WTC11 (cell line): ENCODE measurements at regions of chr7 and their contacts with region 1.

Region 1: DNA sequence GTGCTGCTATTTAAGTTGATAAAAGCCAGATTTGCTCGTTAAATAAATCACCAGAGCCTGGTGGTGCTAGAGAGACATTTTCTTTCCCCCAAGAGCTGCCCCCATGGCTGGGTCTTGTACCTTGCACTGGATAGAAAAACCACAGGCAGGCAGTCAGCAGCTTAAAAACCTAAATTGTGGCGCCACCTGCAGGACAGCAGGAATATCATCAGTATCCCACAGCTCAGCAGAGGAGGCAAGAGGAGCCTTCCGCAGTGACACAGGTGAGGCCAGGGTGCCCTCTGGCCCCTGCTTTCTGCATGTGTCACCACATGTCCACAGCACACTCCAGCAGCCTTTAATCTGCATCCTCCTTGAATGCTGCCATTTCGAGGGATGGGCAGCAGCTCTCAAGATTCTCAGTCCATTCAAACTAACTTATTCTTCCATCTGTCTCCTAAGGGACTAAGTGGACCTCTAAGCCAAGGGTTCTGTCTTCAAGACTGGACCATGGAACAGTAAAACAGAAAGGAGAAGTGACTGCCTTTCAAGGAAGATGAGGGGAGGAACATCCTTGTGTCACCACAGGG is 4.5 kb upstream of the PLXNA4 start:
- DNase-seq: peak; percentile 78
- ATAC-seq: peak; percentile 71
- H3K4me3 Mint-ChIP-seq: no peak overlapping the region
- H3K27ac Mint-ChIP-seq: no peak overlapping the region
- H3K4me1 Mint-ChIP-seq: peaks cover 13% of the 10 kb centered on the region
- H3K27me3 Mint-ChIP-seq: peaks cover 39% of the 10 kb centered on the region
- CTCF ChIP-seq: peak; percentile 68

Region 2: GRCh38 chr7:132394283-132395198 is 186.3 kb before region 1 on chr7:
- CTCF ChIA-PET with region 1: interaction called, 21 read pairs
- POLR2A ChIA-PET with region 1: no interaction called
- DNase-seq: no peak
- ATAC-seq: peak; percentile 74
- H3K4me3 Mint-ChIP-seq: no peak overlapping the region
- H3K27ac Mint-ChIP-seq: no peak overlapping the region
- H3K4me1 Mint-ChIP-seq: peaks cover 7% of the 10 kb centered on the region
- H3K27me3 Mint-ChIP-seq: no peaks in the 10 kb centered on the region
- CTCF ChIP-seq: no peak

Region 3: GRCh38 chr7:132503415-132503814 is 77.4 kb before region 1 on chr7:
- CTCF ChIA-PET with region 1: interaction called, 10 read pairs
- POLR2A ChIA-PET with region 1: no interaction called
- DNase-seq: peak; percentile 40
- ATAC-seq: peak; percentile 85
- H3K4me3 Mint-ChIP-seq: no peak overlapping the region
- H3K27ac Mint-ChIP-seq: no peak overlapping the region
- H3K4me1 Mint-ChIP-seq: peaks cover 8% of the 10 kb centered on the region
- H3K27me3 Mint-ChIP-seq: no peaks in the 10 kb centered on the region
- CTCF ChIP-seq: no peak

Region 4: DNA sequence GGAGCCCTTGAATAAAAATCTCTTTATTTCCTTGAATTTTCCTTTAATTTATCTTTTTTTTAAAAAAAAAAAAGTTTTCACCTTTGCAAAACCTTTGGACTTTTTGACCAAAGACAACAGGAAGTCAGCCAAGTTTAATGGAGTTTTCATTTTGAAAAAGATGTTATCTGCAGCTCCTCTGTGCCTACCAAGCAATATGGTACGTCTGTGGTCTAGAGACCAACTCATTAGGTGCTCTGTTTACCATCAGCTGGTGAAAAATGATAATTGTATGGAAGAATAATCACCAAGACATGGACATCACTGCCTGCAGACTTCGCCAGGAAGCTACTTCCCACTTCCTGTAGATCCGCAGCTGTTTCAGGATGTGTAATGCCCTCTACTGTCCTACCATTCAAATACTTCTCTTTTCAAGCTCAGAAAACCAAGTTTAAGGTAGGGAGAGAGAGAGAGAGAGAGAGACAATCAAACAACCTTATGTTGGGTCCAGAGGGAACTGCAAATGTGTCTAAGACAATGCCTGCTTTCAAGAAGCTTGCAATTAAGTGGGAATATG is 23.2 kb before region 1 on chr7:
- CTCF ChIA-PET with region 1: interaction called, 18 read pairs
- POLR2A ChIA-PET with region 1: no interaction called
- DNase-seq: no peak
- ATAC-seq: peak; percentile 72
- H3K4me3 Mint-ChIP-seq: no peak overlapping the region
- H3K27ac Mint-ChIP-seq: no peak overlapping the region
- H3K4me1 Mint-ChIP-seq: 0 out of 2 replicates have a peak, but pooled peaks cover 3% of the 10 kb centered on the region
- H3K27me3 Mint-ChIP-seq: peaks cover 45% of the 10 kb centered on the region
- CTCF ChIP-seq: no peak

Region 5: GRCh38 chr7:132603220-132603833 is 22.5 kb after region 1 on chr7:
- CTCF ChIA-PET with region 1: interaction called, 16 read pairs
- POLR2A ChIA-PET with region 1: no interaction called
- DNase-seq: no peak
- ATAC-seq: peak; percentile 73
- H3K4me3 Mint-ChIP-seq: no peak overlapping the region
- H3K27ac Mint-ChIP-seq: no peak overlapping the region
- H3K4me1 Mint-ChIP-seq: peaks cover 8% of the 10 kb centered on the region
- H3K27me3 Mint-ChIP-seq: no peaks in the 10 kb centered on the region
- CTCF ChIP-seq: no peak

Region 6: DNA sequence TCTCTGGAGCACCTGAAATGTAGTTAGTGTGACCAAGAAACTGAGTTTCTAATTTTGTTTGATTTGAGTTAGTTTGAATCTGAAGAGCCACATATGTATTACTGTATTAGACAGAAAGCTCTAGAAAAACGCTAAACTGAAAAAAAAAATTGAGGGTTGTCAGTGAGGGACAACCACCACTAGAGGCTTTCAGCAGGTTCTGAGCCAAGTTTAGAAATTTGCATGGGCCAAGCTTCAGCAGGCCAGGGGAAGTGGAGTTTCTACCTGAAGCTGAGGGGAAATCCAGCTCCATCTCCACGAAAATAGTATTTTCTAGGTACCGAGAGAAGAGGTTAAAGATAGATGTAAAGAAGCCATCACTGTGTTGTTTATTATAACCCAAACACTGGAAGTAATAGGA is 73.3 kb after region 1 on chr7:
- CTCF ChIA-PET with region 1: interaction called, 15 read pairs
- POLR2A ChIA-PET with region 1: no interaction called
- DNase-seq: peak; percentile 16
- ATAC-seq: peak; percentile 57
- H3K4me3 Mint-ChIP-seq: peak overlapping the region; percentile 35
- H3K27ac Mint-ChIP-seq: no peak overlapping the region
- H3K4me1 Mint-ChIP-seq: peaks cover 40% of the 10 kb centered on the region
- H3K27me3 Mint-ChIP-seq: no peaks in the 10 kb centered on the region; the same call in 1 of the 2 replicates
- CTCF ChIP-seq: no peak